ENCODE measurements at regions of chr14 and their contacts with region 1.

Region 1: DNA sequence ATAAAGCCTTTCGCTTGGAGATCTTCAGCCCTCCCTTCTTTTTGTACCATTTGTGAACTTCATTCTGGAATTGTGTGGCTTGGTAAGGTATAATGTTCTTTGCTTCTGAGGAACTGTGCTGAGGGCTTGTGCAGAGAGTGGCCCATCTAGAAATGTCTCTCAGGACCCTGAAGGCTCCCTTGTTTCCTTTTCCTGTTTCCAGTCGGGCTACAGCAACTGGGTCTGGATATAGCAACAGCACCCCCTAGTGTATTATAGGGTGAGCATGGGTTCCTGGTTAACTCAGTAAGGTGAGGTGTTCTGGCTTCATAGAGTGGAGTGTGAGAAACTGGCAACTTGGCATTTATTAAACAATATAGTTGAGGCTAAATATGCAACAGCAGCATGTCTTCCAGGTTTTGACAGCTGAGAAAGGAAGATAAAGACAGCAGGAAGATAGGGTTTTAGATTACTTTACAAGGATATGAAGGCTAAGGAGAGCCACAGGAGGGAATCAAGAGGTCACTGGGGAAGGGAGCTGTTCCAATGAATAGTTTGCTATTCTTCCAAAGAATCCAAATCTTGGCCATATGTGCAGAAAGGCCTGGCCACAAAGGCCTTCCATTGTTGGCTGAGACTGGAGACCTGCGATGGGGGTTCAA is 49.1 kb upstream of the RNU6-8 start:
- DNase-seq: peak; percentile 47 to 79 (median 66)
- H3K4me3 ChIP-seq: no peak overlapping the region
- H3K27ac ChIP-seq: no peak overlapping the region
- H3K4me1 ChIP-seq: peaks cover 0 to 11% of the 10 kb centered on the region in 2 donors
- H3K27me3 ChIP-seq: no peaks in the 10 kb centered on the region
- CTCF ChIP-seq: peak; percentile 72 to 89 (median 86)
- POLR2A ChIP-seq: no peak

Region 2: GRCh38 chr14:31510222-31510621 is 741.9 kb before region 1 on chr14:
- intact Hi-C with region 1: loop called (anchors 5 to 10 kb)
- DNase-seq: no peak
- H3K4me3 ChIP-seq: no peak overlapping the region
- H3K27ac ChIP-seq: no peak overlapping the region
- H3K4me1 ChIP-seq: no peaks in the 10 kb centered on the region
- H3K27me3 ChIP-seq: no peaks in the 10 kb centered on the region
- CTCF ChIP-seq: peak; percentile 44 to 79 (median 68)
- POLR2A ChIP-seq: no peak

Region 3: GRCh38 chr14:31937721-31938346 is 314.3 kb before region 1 on chr14:
- intact Hi-C with region 1: loop called (anchors 5 to 10 kb)
- DNase-seq: peak; percentile 54 to 90 (median 88)
- H3K4me3 ChIP-seq: no peak overlapping the region
- H3K27ac ChIP-seq: peak overlapping the region in 1 of 5 donors; percentile 14
- H3K4me1 ChIP-seq: peaks cover 8 to 18% of the 10 kb centered on the region in 2 donors
- H3K27me3 ChIP-seq: no peaks in the 10 kb centered on the region
- CTCF ChIP-seq: no peak
- POLR2A ChIP-seq: no peak

Region 4: DNA sequence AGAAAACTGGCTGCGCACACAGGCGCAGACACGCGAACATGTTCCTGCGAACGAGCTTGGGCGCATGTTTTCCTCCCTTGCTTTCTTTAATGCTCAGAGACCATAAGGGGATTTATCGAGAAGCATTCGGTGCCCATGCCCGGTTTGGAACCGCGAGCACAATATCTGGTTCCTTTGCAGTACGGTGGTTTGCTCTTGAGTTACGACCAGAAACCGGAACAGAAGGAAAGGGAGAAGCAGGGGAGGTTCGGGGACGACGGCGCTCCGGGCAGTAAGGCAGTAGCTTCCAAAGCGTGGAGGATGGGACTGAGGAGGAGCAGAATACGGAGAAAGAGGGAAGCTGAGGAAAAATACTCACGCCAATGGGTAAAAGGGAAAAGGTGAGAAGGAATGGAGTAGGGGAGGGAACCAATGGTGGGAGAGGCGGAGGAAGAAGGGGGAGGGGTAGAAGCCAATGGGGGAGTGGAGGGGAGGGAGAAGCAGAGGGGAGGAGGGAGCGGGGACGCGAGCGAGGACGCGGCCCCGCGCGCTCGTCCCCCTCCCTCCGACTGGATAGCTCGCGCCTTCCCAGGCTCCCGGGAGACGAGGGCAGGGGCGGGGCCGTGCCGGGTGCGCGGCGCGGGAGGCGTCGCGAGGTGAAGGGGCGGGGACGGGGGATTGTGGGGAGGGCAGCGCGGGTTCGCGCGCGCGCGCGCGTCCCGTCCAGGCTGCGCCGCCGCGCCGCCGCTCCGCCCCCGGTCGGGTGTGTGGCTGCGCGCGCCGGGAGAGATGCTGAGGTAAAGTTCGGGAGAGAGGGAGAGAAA is 175.7 kb before region 1 on chr14:
- intact Hi-C with region 1: loop called in 1 of 2 experiments (anchors 5 kb)
- DNase-seq: peak; percentile 96 to 98 (median 97)
- H3K4me3 ChIP-seq: peak overlapping the region; percentile 1 to 95 (median 48)
- H3K27ac ChIP-seq: peak overlapping the region; percentile 20 to 99 (median 99)
- H3K4me1 ChIP-seq: peaks cover 4 to 34% of the 10 kb centered on the region in 2 donors
- H3K27me3 ChIP-seq: no peaks in the 10 kb centered on the region
- CTCF ChIP-seq: no peak
- POLR2A ChIP-seq: peak; percentile 86 to 89

Region 5: DNA sequence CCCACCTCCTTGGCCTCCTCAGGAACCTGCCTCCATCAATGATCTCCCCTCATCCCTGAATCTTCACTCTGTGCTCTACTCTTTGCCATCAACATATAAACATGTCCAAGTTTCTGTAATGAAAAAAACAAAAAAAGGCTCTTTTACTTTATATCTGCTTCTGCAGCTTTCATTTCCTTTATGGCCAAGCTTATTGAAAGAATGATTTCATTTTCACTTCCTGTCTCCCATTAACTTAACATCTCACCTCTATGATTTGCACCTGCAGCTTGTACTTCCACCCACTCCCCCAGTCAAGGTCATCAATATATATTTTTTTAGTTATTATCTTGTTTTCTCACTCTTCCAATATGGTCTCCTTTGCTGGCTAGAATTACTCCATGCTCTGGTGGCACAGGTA is 65.9 kb before region 1 on chr14:
- intact Hi-C with region 1: no loop called
- DNase-seq: no peak
- H3K4me3 ChIP-seq: no peak overlapping the region
- H3K27ac ChIP-seq: no peak overlapping the region
- H3K4me1 ChIP-seq: no peaks in the 10 kb centered on the region
- H3K27me3 ChIP-seq: no peaks in the 10 kb centered on the region
- CTCF ChIP-seq: no peak
- POLR2A ChIP-seq: no peak

Region 6: DNA sequence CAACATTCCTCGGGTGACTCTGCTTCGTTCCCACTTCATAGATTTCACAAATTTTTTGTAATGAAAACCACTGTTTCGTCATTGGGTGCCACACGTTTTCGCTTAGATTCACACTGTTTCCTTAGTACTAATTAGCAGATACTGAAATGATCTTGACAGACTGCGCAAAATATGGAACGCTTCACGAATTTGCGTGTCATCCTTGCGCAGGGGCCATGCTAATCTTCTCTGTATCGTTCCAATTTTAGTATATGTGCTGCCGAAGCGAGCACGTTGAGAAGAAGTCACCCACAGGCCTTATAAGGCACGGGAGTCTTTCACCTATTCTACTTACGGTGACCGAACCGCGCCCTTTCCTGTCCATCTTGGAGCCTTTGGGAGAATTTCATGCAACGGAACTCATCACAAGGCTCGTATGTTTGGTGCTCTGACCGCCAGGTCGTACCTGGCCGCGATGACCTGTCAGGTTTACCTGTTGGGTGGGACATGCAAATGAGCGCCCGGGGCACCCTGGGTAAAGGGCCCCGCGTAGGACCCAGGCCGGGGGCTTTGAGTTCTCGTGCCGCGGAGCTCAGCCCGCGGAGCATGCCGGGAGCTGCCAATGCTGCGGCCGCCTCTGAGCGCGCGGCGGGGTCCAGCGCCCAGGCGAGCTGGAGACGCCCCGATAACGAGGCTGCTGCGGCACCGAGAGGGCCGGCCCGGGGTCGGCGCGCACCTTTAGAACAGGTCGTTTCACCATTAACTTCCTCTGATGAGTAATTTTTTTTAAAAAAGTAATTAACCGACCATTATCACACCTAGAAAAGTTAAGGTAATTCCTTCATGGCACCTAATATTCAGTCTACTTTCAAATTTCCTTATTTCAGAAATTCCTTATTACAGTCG is 48.9 kb before region 1 on chr14 and contains the start of gene RNU6-8:
- intact Hi-C with region 1: loop called in 1 of 2 experiments (anchors 10 kb)
- DNase-seq: peak; percentile 88 to 94 (median 93)
- H3K4me3 ChIP-seq: peak within 1 kb of the TSS; percentile 27 to 64 (median 40)
- H3K27ac ChIP-seq: peak within 1 kb of the TSS; percentile 41 to 95 (median 90)
- H3K4me1 ChIP-seq: peaks cover 0 to 23% of the 10 kb centered on the region in 2 donors
- H3K27me3 ChIP-seq: no peaks in the 10 kb centered on the region
- CTCF ChIP-seq: no peak
- POLR2A ChIP-seq: peak; percentile 75 to 78
- total RNA-seq, gene RNU6-8: not detected

Region 7: GRCh38 chr14:32469388-32470160 is 217.4 kb after region 1 on chr14:
- intact Hi-C with region 1: loop called in 1 of 2 experiments (anchors 10 kb)
- DNase-seq: no peak
- H3K4me3 ChIP-seq: no peak overlapping the region
- H3K27ac ChIP-seq: peak overlapping the region in 1 of 5 donors; percentile 18
- H3K4me1 ChIP-seq: peaks cover 0 to 14% of the 10 kb centered on the region in 2 donors
- H3K27me3 ChIP-seq: no peaks in the 10 kb centered on the region
- CTCF ChIP-seq: peak; percentile 46 to 84 (median 64)
- POLR2A ChIP-seq: no peak